Aorta (tissue), 5 donors: ENCODE measurements at regions of chr4 and their contacts with region 1.

Region 1: DNA sequence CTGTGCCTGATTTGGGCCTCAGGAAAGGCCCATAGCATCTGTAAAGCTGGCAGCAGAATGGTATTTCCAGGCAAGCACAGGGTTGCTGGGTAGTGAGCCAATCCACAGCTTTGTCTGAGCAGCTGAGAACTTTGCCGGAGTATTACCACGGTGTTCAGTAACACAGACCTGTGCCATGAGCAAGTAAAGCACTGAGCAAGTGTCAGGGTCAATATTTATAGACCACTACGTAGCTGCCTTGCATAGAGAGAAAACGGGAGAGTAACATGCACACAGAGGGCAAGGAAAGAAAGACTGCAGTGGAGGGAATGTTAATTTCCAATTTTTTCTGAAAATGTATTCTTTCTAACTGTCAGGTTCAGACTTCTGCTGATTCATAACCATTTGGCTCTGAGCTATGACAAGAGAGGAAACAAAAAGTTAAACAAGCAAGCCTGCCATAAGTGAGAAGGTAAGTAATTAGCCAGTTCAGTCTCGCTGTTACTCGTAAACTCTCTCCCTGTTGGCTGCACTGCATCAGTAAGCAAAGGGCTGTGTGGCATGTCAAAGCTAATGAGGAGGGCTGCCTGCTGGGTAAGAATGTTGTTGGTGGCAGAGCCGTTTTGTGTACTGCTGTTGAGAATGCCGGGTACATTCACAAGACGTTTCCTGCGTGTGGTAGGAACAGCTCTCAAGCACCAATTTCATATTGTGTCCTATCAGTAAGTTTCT is 238.1 kb downstream of the BMPR1B start:
- DNase-seq: no peak
- ATAC-seq: peak; percentile 83
- H3K4me3 ChIP-seq: peak overlapping the region; percentile 36 to 93
- H3K27ac ChIP-seq: peak overlapping the region; percentile 24 to 90
- H3K4me1 ChIP-seq: peaks cover 0 to 2% of the 10 kb centered on the region in 2 donors
- H3K27me3 ChIP-seq: no peaks in the 10 kb centered on the region

Region 2: DNA sequence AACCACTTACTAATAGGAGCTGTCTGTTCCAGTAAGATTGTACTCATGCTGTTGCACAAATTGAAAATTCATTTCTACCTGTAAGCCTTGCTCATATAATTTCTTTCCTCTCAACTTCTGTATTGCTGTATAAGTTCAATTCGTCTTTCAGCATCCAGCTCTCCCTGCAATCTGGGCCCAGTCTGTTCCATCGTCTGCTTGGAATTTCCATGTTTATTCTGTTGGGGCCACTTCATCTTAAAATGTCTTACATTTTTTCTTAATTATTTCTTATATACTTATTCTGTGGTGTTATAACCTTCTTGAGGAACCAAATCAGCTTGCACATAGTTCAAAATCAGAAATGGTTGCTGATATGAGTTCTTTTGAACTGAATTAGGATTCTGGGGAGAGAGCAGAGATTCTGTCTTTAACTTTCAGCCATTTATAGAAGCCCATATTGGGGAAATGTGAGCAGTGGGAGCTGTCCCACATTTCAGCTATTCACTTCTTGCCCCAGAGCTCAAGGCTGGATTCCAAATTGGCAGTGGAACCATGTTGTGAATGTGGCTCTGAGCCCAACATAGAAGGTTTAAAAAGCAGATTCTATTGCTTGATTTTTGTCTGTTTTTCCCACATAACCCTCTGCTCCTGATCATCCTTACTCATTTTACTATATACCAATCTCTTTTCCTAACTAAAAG is 53.9 kb after region 1 on chr4:
- intact Hi-C with region 1: loop called in 1 of 2 experiments (anchors 5 kb)
- DNase-seq: no peak
- ATAC-seq: peak; percentile 37
- H3K4me3 ChIP-seq: no peak overlapping the region
- H3K27ac ChIP-seq: no peak overlapping the region
- H3K4me1 ChIP-seq: peaks cover 0 to 2% of the 10 kb centered on the region in 2 donors
- H3K27me3 ChIP-seq: no peaks in the 10 kb centered on the region

Region 3: DNA sequence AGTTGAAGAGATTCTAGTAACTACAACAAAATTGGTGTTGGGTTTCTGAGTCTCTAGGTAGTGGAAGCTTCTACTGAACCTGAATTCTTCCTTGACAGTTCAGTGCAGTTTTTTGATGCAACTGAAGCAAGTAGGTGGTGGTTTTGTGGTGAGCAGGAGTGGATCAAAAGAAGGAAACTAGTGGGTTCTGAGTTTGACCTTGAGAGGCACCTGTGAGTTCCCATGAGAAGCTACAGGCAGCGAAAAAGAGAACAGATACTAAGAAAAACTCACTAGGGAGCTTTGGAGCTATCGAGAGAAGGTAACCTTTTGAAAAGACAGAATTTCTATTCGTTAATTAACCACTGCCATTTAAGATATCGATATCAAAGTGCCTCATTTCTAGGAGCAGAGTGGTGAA is 989.2 kb after region 1 on chr4:
- intact Hi-C with region 1: no loop called
- DNase-seq: no peak
- ATAC-seq: no peak
- H3K4me3 ChIP-seq: no peak overlapping the region
- H3K27ac ChIP-seq: no peak overlapping the region
- H3K4me1 ChIP-seq: no peaks in the 10 kb centered on the region
- H3K27me3 ChIP-seq: no peaks in the 10 kb centered on the region